ENCODE measurements at regions of chr16 and their contacts with region 1.

Region 1: GRCh38 chr16:85607321-85607765 is 5.8 kb upstream of the GSE1 start:
- DNase-seq: no peak
- CTCF ChIP-seq: no peak

Region 2: DNA sequence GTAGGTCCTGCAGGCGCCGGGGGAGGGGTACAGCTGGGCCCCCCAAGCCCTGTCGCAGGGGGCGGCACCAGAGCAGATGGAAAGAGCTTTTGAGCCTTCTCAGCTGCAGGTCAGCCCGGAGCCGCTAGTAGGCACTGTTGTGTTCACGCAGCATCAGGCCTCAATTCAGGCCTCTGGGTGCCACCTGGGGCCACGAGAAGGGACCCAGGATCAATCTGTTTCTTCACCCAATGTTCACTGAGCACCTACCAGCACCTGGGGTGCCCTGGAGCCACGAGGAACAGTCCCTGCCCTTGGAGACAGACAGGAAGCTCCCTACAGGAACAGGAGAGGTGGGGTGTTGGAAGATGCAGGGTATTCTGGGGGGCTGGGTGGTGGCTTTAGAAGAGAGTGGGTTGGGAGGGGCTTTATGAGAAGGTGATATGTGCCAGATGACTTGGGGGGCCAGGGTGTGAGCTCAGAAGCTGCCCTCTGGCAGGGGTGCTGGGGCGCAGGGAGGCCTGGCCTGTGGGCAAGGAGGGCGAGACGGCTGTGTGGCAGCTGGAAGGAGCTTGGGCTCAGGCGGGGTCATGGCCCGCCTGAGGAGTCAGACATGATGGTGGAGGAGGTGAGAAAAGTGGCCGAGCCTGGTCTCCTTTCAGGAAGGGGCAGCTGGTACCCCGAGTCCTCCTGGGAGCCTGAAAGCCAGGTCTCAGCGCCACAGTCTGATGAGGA is 116.1 kb before region 1 on chr16:
- in situ Hi-C with region 1: loop called (anchors 10 kb)
- DNase-seq: peak; percentile 85
- CTCF ChIP-seq: peak; percentile 75

Region 3: GRCh38 chr16:85554112-85554813 is 53.1 kb before region 1 on chr16:
- in situ Hi-C with region 1: loop called (anchors 10 kb)
- DNase-seq: peak; percentile 92
- CTCF ChIP-seq: no peak

Region 4: DNA sequence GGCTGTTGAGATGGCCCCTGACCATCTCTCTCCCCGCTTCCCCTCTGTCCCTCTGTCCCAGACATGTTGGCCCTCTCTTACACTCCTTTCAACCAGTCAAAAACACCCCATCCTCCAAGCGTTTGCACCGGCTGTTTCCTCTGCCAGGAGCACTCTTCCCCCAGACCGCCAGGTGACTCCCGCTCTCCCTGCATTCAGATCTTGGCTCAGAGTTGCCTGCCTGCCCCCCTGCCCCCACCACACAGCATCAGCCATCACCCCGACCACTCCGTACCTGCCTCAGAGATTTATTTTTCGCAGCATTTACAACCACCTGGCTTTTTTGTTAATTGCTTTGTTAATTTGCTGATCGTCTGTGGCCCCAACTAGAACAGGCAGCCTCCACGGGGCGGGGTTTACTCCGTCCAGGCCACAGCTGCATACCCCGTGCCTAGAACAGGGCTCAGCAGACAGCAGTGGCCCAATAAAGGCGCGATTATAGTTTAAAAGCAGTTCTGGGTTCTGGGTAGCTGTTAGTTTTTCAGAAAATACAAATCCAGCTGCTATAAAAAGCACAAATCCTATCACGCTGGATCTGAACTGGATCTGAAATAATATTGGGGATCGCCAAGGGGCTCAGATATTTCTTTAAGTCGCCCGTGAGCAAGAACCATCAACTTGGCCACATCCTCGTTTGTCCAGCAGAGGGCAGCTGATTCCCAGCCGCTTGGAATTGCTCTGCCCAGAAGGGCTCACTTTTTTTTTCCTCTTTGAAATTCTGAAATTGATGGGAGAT is 465.2 kb after region 1 on chr16:
- in situ Hi-C with region 1: no loop called
- DNase-seq: peak; percentile 83
- CTCF ChIP-seq: peak; percentile 74